Dorsolateral prefrontal cortex (tissue), 120 donors: ENCODE measurements at regions of chr7 and their contacts with region 1.

Region 1: DNA sequence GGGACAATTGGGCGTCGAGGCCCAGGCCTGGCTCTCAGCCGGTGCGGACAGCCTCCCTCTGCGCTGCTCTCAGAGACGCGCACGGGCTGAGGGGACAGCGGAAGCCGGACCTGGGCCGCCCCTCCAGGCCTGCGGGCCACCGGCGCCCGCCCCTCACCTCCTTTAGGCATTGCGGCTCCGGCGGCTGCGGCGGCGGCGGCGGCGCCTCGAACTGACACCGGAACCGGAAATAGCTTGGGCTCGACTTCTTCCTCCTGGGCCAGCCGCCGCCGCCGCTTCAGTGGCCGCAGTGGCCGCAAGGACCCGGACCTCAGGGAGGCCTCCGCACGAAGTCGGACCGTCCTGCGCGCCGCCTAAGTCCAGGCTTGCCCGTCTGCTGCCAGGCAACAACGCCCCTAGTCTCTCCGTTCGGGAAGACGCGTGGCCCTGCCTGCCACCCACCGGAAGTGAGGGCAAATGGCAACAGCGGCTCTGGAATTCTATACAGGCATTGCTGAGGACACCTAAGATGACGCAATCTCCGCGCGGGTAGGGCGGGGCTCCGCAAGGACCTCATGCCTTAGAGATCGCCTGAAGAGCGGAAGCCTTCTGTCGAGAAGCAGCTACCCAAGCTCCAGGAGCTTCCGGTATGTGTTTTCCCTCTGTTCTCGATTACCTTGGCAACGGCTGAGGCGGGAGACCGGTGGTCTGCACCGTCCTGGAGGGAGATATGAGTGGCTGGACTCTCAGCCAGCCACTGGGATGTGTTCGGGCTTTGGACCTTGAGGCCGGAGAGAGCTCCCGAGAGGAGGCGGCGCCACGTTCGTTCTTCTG is at the starts of genes BUD31 and PDAP1:
- DNase-seq: peak; percentile 83 to 94 (median 92)
- H3K4me3 ChIP-seq: peak within 1 kb of the TSS; percentile 75 to 100 (median 98)
- H3K27ac ChIP-seq: peak within 1 kb of the TSS; percentile 94 to 100 (median 99)
- H3K27me3 ChIP-seq: no peaks in the 10 kb centered on the region
- CTCF ChIP-seq: peak in 30 of 56 donors; percentile 0 to 59 (median 30)
- total RNA-seq, gene BUD31: 37.0 to 97.8 (median 64.0) TPM
- total RNA-seq, gene PDAP1: 57.9 to 106 (median 75.1) TPM

Region 2: GRCh38 chr7:99040104-99040958 is 368.3 kb before region 1 on chr7:
- intact Hi-C with region 1: loop called in 1 of 2 experiments (anchors 5 kb)
- DNase-seq: peak; percentile 63 to 89 (median 84)
- H3K4me3 ChIP-seq: no peak overlapping the region
- H3K27ac ChIP-seq: peak overlapping the region in 51 of 59 donors; percentile 2 to 83 (median 63)
- H3K27me3 ChIP-seq: no peaks in the 10 kb centered on the region
- CTCF ChIP-seq: peak; percentile 68 to 93 (median 87)

Region 3: DNA sequence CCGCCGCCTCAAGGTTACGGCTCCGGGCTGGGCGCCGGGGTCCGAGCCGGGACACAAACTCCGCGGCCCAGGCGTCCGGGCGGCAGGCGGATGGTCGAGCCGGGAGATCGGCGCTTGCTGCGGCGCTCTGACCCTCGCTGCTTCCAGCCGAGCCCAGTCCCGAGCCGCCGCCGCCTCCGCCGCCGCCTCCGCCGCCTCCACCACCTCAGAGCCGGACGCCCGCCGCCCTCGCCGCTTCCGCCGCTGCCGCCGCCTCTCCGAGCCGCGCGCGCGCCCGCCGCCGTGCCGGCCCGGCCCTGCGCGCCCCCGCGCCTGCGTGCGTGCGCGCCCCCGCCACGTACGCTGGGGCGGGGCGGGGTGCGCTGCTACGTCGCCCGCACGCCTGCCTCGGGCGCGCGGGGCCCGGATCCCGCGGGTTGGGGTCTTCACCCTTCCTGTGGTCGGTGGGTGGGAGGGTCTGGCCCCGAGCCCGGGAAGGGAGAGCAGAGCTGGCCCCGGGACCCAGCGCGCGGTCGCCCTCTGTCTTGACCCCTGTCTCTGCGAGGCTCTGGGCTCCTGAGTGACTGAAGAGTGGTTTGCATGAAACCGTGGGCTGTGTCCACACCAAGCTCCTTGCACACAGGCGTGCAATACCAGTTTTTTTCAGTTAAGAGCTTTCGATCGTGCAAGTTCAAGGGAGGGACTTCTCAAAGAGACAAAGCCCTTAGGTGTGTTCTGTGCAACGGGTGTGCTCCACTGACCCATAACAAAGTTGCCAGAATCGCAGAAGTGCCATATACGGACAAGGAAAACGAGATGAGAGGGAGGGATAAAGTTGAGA is 264.5 kb before region 1 on chr7 and contains the start of gene SMURF1:
- intact Hi-C with region 1: loop called in 1 of 2 experiments (anchors 10 kb)
- DNase-seq: peak; percentile 29 to 73 (median 62)
- H3K4me3 ChIP-seq: peak within 1 kb of the TSS; percentile 71 to 99 (median 91)
- H3K27ac ChIP-seq: peak within 1 kb of the TSS; percentile 43 to 98 (median 92)
- H3K27me3 ChIP-seq: no peaks in the 10 kb centered on the region
- CTCF ChIP-seq: peak in 37 of 56 donors; percentile 8 to 55 (median 30)
- total RNA-seq, gene SMURF1: 23.6 to 40.5 (median 32.4) TPM

Region 4: GRCh38 chr7:99325545-99326407 is 82.8 kb before region 1 on chr7 and contains the start of gene ARPC1A:
- intact Hi-C with region 1: loop called (anchors 2 to 5 kb)
- DNase-seq: peak; percentile 60 to 91 (median 76)
- H3K4me3 ChIP-seq: peak within 1 kb of the TSS; percentile 61 to 100 (median 98)
- H3K27ac ChIP-seq: peak within 1 kb of the TSS in 57 of 59 donors; percentile 29 to 96 (median 83)
- H3K27me3 ChIP-seq: no peaks in the 10 kb centered on the region
- CTCF ChIP-seq: peak in 34 of 56 donors; percentile 3 to 63 (median 30)
- total RNA-seq, gene ARPC1A: 84.1 to 180 (median 126) TPM

Region 5: DNA sequence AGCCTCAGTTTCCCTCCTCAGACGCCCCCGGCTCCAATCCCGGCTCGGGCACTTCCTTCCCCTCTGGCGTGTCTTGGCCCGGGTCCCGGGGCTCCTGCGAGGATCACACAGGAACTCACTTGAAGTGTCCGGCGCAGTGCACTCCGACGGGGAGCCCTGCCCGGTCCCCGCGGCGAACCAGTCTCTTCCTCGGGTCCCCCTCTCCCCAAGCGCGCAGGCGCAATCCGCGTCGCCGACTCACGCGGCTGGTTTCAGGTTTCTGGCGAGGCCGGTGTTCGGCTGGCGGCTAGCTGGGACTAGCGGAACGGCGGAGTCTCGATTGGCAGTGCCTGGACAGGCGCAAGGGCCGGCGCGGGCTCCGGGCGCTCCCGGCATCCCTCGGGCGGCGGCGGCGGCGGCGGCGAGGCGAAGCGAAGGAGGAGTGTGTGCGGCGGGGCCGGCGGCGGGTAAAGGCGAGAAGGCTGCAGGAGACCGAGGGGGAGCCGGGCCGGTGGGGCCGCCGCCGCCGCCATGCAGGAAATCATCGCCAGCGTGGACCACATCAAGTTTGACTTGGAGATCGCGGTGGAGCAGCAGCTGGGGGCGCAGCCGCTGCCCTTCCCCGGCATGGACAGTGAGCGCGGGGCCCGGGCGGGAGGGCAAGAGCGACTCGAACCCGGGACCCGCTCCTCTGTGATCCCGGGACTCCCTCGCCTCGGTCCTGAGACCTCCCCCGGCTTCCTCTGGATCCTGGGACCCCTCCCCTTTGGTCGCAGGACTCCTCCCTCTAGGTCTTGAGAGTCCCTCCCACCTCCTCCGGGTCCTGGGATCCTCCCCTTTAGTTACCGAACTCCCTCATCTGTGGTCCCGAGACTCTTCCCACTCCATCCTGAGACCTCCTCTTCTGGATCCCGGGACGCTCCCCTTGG is 30.2 kb after region 1 on chr7 and contains the starts of genes CPSF4 and PTCD1:
- intact Hi-C with region 1: loop called in 1 of 2 experiments (anchors 2 kb)
- DNase-seq: peak; percentile 88 to 98 (median 95)
- H3K4me3 ChIP-seq: peak within 1 kb of the TSS; percentile 62 to 100 (median 95)
- H3K27ac ChIP-seq: peak within 1 kb of the TSS in 54 of 59 donors; percentile 19 to 93 (median 80)
- H3K27me3 ChIP-seq: no peaks in the 10 kb centered on the region
- CTCF ChIP-seq: peak in 28 of 56 donors; percentile 12 to 50 (median 30)
- total RNA-seq, gene CPSF4: 31.8 to 83.9 (median 47.3) TPM
- total RNA-seq, gene PTCD1: 3.2 to 13.4 (median 6.3) TPM

Region 6: DNA sequence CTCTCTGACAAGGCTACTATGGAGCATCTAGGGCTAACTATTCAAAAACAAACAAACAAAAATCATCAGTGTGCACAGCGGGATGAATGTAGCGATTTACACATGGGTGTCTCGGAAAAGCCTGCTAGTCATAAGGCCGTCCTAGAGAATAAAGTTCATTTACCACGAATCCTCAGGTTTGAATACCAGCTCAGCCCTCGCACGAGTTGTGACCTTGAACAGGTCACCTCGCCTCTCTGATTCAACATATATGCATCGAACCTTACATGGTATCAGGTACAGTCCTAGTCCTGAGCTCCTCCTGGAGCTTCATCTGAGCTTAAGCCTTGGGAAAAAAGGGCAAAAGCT is 56.8 kb after region 1 on chr7:
- intact Hi-C with region 1: loop called in 1 of 2 experiments (anchors 5 kb)
- DNase-seq: no peak
- H3K4me3 ChIP-seq: peak overlapping the region; percentile 68 to 100 (median 91)
- H3K27ac ChIP-seq: peak overlapping the region in 57 of 59 donors; percentile 61 to 99 (median 94)
- H3K27me3 ChIP-seq: no peaks in the 10 kb centered on the region
- CTCF ChIP-seq: no peak

Region 7: DNA sequence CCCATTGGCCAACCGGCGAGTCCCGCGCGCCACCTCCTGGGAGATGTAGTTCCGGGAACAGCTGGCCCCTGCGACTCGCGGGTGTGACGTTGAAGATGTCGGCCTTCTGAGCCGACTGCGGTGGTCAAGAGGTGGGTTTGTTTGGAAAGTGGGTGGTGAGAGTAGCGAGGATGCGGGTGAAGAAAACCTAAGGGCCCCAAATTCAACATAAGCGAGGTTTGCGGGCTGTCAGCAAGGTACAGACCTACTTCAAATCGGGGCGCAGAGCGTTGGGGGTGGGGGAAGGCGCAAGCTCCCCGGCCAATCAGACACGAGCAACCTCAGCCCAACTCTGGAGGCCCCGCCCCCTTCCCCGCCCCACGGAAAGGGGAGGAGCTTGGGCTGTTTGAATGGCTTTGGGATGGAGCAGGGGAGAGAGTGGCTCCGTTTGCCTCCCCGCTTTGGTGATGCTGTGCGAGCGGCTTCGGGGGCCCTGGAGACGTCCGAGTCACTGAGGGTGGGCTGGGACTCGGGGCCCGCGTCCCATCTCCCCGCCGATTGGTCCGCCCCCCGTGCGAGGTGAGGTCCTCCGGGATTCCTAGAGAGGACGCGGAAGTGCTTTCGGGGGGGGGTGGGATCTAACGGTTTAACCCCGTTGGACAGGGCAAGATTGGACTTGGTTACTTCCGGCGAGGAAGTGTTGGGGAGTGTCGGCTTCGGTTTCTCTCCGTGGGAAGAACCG is 96.2 kb after region 1 on chr7 and contains the start of gene ZKSCAN5:
- intact Hi-C with region 1: loop called in 1 of 2 experiments (anchors 2 kb)
- DNase-seq: peak; percentile 95 to 99 (median 97)
- H3K4me3 ChIP-seq: peak within 1 kb of the TSS; percentile 60 to 99 (median 85)
- H3K27ac ChIP-seq: peak within 1 kb of the TSS; percentile 78 to 99 (median 97)
- H3K27me3 ChIP-seq: no peaks in the 10 kb centered on the region
- CTCF ChIP-seq: peak in 47 of 56 donors; percentile 7 to 64 (median 37)
- total RNA-seq, gene ZKSCAN5: 10.7 to 19.7 (median 14.4) TPM